ENCODE measurements at regions of chr15 and their contacts with region 1.

Region 1: DNA sequence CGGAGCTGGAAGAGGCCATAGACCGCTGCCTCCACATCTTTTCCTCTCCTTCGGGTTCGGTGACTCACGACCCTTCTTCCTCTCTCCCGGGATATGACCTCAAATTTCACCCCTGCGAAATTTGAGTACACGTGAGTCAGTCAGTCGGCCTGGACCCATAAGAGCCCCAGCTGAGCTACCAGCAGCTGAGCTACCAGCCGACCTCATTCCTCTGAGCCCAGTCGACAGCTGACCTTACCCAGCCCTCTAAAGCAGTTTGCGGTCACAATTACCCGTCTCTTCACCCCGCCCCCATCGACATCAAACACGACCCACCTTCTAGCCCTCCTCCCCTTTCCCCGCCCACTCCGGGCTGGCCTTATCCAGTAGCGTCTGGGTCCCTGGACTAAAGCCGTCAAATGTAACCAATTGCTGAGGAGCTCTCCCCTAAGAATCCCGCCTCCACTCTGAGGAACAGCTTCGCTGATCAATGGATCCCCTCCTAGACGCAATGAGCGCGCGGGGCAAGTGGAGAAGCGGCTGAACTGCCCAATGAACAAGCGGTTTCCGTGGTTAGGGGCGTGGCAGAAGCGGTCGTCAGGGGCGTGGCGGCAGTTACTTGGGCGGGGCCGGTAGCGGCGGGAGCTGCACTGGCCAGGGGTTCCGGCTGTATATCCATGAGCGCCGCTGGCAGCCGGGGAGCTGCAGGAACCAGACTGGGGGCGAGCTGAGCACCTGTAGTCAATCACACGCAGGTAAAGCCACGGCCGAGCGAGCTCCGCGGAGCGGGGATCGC is at the start of gene ABHD2:
- DNase-seq: peak; percentile 99 to 100
- ATAC-seq: peak; percentile 84 to 86
- H3K4me3 ChIP-seq: peak within 1 kb of the TSS; percentile 75 to 94 (median 90)
- H3K27ac ChIP-seq: peak within 1 kb of the TSS; percentile 93 to 99 (median 98)
- H3K4me1 ChIP-seq: peaks cover 41 to 48% of the 10 kb centered on the region in 2 donors
- H3K27me3 ChIP-seq: no peaks in the 10 kb centered on the region
- CTCF ChIP-seq: no peak
- POLR2A ChIP-seq: peak; percentile 97 to 99
- total RNA-seq, gene ABHD2: 19.3 to 150 (median 64.5) TPM

Region 2: GRCh38 chr15:88467073-88467934 is 620.7 kb before region 1 on chr15 and contains the starts of genes MRPL46 and MRPS11:
- in situ Hi-C with region 1: no loop called
- intact Hi-C with region 1: loop called (anchors 10 kb)
- DNase-seq: peak; percentile 76 to 83
- ATAC-seq: peak; percentile 98
- H3K4me3 ChIP-seq: peak within 1 kb of the TSS; percentile 87 to 99 (median 94)
- H3K27ac ChIP-seq: peak within 1 kb of the TSS; percentile 90 to 98 (median 94)
- H3K4me1 ChIP-seq: peaks cover 28 to 34% of the 10 kb centered on the region in 2 donors
- H3K27me3 ChIP-seq: no peaks in the 10 kb centered on the region
- CTCF ChIP-seq: no peak
- POLR2A ChIP-seq: peak; percentile 17 to 44
- total RNA-seq, gene MRPL46: 36.2 to 48.9 (median 44.6) TPM
- total RNA-seq, gene MRPS11: 33.5 to 47.8 (median 45.2) TPM

Region 3: DNA sequence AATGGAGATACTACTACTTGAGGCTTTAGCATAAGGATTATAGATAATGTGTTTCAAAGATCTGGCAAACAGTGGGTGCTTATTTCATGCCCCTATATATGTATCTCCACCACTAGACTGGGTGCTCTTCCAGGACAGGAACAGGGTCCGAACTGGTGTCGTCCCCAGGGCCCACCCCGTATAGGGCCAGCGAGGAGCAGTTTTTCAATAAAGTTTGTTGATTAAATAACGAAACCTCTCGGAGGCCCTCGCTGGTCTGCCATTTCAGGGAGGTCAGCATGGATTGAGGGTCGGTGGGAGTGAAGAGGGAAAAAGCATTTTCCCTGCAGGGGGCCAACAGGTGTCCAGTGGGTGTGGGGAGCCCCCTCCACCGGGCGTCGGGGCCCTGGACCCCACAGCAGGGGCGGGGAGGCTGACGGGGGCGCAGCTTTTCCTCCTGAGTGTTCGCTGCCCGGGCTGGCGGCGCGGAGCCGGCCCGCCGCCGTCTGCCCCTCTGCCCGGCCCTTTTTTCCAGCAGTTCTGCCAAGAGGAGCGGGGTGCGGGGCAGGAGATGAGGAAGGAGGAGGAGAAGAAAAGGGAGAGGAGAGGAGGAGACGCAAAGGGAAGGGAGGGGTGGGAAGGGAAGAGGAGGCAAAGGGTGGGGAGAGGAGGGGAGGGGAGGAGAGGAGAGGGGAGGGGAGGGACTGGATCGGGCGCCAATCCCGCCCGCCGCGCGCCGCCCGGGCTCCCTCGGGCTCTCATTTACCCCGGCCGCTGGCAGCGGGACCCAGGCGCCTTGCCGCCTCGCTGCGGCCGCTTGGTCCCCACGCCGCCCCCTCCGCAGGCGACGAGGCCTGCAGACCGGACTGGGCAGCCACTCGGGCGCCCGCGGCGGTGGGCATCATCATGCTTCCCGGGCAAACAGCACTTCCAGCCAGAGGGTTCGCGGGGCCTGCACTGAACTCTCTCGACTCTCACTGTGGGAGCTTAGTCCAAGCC is 382.9 kb before region 1 on chr15:
- in situ Hi-C with region 1: no loop called
- intact Hi-C with region 1: loop called (anchors 5 kb)
- DNase-seq: no peak
- ATAC-seq: peak in 1 of 2 donors; percentile 29
- H3K4me3 ChIP-seq: peak overlapping the region; percentile 37 to 52 (median 49)
- H3K27ac ChIP-seq: no peak overlapping the region
- H3K4me1 ChIP-seq: peaks cover 3 to 24% of the 10 kb centered on the region in 2 donors
- H3K27me3 ChIP-seq: peaks cover 3 to 16% (median 4%) of the 10 kb centered on the region in 3 donors
- CTCF ChIP-seq: no peak
- POLR2A ChIP-seq: no peak

Region 4: DNA sequence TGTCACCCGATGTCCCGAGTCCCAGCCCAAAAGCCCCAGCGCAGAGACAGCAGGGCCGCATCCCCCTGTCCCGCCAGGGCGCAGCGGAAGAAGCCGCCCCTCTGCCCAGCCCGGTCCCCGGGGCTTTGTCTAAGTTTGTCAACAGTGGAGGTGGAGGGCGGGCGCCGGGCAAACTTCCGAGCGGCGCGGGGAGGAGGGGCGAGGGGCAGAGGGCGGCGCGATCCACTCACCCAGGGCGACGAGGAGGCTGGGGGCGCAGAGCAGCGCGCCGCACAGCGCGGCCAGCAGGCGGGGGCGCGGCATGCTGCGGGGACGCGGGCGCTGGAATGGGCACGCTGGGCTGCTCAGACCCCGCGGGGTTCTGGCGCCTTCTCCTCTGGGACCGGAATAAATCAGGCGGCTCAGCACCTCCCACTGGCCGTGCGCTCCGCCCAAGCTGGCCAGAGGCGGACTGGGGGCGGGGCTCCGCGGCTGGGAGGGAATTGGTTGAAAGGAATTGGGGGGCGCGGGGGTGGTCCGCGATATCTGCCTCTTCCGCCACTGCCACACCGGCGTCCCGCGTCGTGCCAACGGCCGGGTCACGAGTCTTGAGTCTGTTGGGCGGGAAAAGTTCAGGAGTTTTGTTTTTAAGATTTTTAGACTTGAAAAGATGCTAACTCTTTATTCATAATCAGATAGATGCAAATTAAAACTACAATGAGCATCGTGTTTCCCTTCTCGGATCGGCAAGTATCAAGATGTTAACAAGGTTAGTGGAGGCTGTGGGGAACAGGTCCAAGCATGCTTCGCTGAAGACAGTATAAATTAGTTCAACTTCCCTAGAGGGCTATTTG is 174.8 kb before region 1 on chr15 and contains the start of gene MFGE8:
- in situ Hi-C with region 1: loop called in 1 of 4 experiments (anchors 10 kb)
- intact Hi-C with region 1: loop called (anchors 5 kb)
- DNase-seq: peak; percentile 74 to 86
- ATAC-seq: peak; percentile 58 to 60
- H3K4me3 ChIP-seq: peak within 1 kb of the TSS; percentile 70 to 92 (median 86)
- H3K27ac ChIP-seq: peak within 1 kb of the TSS; percentile 92 to 99 (median 97)
- H3K4me1 ChIP-seq: peaks cover 40 to 42% of the 10 kb centered on the region in 2 donors
- H3K27me3 ChIP-seq: no peaks in the 10 kb centered on the region
- CTCF ChIP-seq: peak in 2 of 5 experiments; percentile 25 to 35
- POLR2A ChIP-seq: peak; percentile 99
- total RNA-seq, gene MFGE8: 239 to 437 (median 395) TPM

Region 5: DNA sequence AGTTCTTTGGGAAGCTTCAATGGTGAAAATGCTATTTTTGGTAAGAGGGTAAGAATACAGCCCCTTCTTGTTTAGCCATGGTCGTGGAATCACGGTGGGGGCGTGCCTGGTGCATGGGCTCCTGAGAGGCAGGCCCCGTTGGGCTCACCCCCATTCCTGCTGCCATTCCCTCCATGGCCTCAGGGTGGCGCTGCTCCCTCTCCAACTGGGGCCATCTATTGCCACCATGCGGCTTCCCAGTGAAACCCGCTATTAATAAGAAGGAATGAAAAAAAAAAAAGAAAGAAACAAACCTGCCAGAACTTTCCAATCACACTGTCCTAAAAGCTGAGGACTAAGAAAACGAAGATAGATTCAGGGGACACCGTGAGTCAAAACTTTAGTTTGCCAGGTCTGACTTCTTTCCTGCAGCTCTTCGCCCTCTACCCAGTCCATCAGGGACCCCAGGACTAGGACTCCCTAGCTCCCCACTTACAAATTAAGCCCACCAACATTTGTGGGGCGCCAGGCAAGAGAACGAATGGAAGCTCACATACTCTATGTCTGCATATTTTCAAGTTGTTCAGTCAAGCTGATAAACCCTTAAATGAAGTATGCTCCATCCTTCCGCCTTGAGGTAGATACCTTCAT is 30.4 kb before region 1 on chr15:
- in situ Hi-C with region 1: no loop called
- intact Hi-C with region 1: loop called (anchors 2 kb)
- DNase-seq: peak; percentile 50 to 73
- ATAC-seq: peak; percentile 81 to 94
- H3K4me3 ChIP-seq: no peak overlapping the region
- H3K27ac ChIP-seq: no peak overlapping the region
- H3K4me1 ChIP-seq: peaks cover 0 to 3% of the 10 kb centered on the region in 2 donors
- H3K27me3 ChIP-seq: no peaks in the 10 kb centered on the region
- CTCF ChIP-seq: peak; percentile 97 to 99 (median 98)
- POLR2A ChIP-seq: no peak

Region 6: DNA sequence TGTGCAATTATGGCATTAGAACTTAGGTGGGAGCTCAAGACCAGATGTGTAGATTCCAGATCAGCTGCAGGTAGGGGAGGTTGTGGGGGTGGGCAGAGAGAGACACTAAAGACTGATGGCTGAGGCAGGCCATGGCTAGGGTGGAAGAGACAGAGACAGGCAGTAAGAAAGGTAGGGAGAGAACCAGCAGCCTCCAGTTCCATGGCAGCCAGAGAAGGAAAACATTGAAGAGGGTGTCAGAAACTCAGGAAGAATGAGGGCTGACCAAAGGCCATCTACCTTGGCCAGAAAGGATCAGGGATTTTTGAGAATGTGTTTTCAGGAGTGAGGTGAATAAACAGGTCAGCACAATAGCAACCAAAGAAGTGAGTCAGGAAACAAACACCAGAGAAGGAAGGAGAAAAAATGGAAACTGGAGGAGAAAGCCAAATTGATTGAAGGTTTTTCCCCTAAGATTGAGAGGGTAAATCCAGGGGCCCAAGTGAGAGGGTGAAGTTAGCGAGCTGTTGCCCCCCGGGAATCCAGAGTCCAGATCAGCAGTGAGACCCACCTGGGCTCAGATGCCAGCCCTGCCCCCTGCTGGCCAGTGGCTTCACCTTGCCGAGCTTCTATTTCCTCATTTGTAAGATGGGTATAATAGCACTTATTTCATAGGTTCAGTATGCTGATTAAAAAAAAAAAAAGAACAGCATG is 41.3 kb after region 1 on chr15:
- in situ Hi-C with region 1: no loop called
- intact Hi-C with region 1: loop called (anchors 2 kb)
- DNase-seq: peak in 1 of 2 donors; percentile 56
- ATAC-seq: no peak
- H3K4me3 ChIP-seq: no peak overlapping the region
- H3K27ac ChIP-seq: peak overlapping the region; percentile 61 to 81 (median 78)
- H3K4me1 ChIP-seq: peaks cover 48 to 77% of the 10 kb centered on the region in 2 donors
- H3K27me3 ChIP-seq: no peaks in the 10 kb centered on the region
- CTCF ChIP-seq: peak; percentile 37 to 80 (median 71)
- POLR2A ChIP-seq: no peak

Region 7: DNA sequence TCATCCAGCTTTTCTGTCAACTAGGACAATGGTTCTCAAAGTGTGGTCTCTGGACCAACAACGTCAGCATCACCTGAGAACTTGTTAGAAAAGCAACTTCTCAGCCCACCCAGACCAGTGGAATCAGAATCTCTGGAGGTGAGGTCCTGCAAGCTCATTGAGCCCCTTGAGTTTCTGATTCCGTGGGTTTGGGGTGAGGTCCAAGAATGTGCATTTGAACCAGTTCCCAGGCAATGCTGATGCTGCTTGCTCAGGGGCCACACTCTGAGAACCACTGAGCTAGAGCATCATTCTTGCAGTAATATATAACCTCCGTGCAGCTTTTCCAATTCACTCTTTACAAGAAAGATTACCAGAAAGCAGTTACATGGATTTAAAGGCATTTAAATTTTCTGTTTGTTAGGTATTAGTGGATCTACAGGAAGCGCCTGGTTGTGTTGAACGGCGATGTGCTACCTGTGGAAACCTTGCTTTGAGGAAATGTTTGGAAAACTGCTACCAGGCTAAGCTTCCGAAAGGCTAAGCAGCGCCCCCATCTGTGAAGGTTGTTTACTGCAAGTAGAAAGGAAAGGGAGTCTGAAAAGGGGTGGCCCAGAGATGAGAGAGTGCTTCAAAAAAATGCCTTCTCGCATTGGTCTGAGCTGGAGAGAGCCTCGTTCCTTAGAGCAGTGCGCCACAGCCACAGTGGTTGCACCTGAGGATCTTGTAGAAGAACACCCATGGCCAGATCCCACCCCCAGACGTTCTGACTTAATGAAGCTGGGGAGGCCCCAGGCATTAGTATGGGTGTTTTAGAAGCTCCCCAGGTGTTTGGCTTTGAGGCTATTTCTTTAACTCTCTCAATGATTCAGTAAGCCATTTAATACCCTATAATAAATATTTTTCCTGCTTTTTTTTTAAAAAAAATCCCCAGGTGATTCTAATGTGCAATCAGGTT is 83.4 kb after region 1 on chr15:
- in situ Hi-C with region 1: no loop called
- intact Hi-C with region 1: loop called (anchors 1 kb)
- DNase-seq: peak in 1 of 2 donors; percentile 58
- ATAC-seq: no peak
- H3K4me3 ChIP-seq: no peak overlapping the region
- H3K27ac ChIP-seq: peak overlapping the region in 2 of 4 donors; percentile 6 to 61
- H3K4me1 ChIP-seq: peaks cover 28 to 35% of the 10 kb centered on the region in 2 donors
- H3K27me3 ChIP-seq: no peaks in the 10 kb centered on the region
- CTCF ChIP-seq: peak; percentile 50 to 75 (median 66)
- POLR2A ChIP-seq: no peak